CD4-positive, alpha-beta T cell (primary cell): ENCODE measurements at regions of chr5 and their contacts with region 1.

Region 1: DNA sequence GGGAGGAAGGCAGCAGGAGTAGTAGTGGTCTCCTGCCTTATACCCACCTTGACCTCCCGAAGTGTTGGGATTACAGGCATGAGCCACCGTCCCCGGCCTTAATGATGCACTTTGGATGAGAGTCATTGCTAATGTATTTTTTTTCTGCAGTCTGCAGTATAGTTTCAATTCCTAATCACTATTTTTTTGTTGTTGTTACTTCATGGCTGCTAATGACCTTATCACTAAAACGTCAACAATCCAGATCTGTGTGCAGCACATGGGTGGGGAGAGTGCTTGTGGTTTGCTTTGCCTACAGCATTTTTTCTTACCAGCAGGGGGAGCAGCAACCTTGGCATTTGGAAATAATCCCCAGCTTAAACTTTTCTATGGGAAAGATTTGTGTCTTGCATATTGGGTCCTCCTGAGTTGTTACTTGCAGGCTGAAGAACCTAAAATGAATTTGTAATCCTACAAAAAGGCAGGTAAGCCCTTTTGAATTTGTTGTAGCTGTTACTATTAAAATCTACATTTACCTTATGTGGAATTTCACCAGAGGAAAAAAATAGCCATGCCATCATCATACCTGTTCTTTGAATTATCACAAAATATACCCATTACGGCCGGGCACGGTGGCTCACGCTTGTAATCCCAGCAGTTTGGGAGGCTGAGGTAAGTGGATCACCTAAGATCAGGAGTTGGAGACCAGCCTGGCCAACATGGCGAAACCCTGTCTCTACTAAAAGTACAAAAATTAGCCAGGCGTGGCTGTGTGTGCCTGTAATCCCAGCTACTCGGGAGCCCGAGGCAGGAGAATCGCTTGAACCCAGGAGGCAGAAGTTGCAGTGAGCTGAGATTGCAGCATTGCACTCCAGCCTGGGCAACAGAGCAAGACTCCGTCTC is 6.3 kb upstream of the MED7 start:
- DNase-seq: peak; percentile 66 to 92 (median 77)
- ATAC-seq: peak; percentile 86
- H3K4me3 ChIP-seq: no peak overlapping the region
- H3K4me3 Mint-ChIP-seq: peak overlapping the region; percentile 28
- H3K27ac ChIP-seq: no peak overlapping the region
- H3K27ac Mint-ChIP-seq: peak overlapping the region; percentile 53
- H3K4me1 ChIP-seq: peaks cover 35% of the 10 kb centered on the region
- H3K4me1 Mint-ChIP-seq: peaks cover 46% of the 10 kb centered on the region
- H3K27me3 ChIP-seq: no peaks in the 10 kb centered on the region
- H3K27me3 Mint-ChIP-seq: no peaks in the 10 kb centered on the region
- CTCF ChIP-seq: peak; percentile 82

Region 2: DNA sequence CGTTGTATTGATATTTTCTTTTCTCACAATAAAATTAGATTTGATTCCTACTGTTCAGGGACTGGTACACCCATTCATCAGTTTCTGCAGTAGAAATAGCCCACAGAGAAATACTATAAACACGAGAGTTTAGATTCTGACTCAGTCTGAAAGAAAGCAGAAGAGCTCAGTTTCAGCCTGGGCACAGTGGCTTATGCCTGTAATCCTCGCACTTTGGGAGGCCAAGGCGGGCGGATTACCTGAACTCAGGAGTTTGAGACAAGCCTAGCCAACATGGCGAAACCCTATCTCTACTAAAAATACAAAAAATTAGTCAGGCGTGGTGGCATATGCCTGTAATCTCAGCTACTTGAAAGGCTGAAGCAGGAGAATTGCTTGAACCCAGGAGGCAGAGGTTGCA is 40.2 kb after region 1 on chr5:
- CTCF ChIA-PET with region 1: interaction called, 13 read pairs
- POLR2A ChIA-PET with region 1: interaction called, 27 read pairs
- intact Hi-C with region 1: loop called in 1 of 2 experiments (anchors 2 kb)
- DNase-seq: peak in 1 of 14 experiments; percentile 42
- ATAC-seq: no peak
- H3K4me3 ChIP-seq: peak overlapping the region; percentile 85
- H3K4me3 Mint-ChIP-seq: peak overlapping the region; percentile 92
- H3K27ac ChIP-seq: peak overlapping the region; percentile 38 to 67
- H3K27ac Mint-ChIP-seq: peak overlapping the region; percentile 96
- H3K4me1 ChIP-seq: peaks cover 72% of the 10 kb centered on the region
- H3K4me1 Mint-ChIP-seq: peaks cover 92% of the 10 kb centered on the region
- H3K27me3 ChIP-seq: no peaks in the 10 kb centered on the region
- H3K27me3 Mint-ChIP-seq: no peaks in the 10 kb centered on the region
- CTCF ChIP-seq: no peak

Region 3: DNA sequence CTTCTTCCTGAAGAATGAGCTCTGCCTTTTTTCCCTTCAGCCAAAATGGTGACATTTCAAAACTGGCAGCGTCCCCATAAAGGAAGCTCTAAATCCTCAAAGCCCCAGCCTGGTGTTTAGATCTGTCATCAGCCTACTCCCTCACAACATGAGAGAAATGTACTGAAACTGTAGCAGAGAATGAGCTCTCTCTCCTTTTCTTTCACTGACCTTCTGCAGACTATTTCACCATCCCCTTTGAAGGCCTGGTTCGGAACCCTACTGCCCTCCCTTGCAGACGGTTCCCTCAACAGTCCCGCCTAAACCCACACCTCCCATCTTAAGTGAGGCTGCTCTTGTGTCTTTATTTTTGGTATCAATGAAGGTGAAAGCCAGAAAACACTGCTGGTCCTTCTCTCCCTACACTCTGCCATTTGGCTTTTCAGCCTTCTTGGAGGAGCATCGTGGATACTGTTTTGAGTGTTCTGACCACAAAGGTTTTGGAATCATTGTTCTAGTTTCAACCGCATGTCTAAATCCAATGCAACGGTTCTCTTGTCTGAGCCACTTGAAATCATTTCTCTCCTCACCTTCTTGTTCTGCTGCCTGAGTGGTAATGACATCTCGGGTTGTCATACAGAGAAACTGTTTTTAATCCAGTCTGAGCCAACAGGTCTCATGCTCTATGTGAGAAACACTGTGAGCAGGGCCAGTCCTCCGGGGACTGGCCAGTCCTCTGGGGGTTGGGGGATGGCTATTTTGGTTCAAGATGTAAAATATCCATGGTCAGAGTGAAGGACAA is 70.7 kb after region 1 on chr5:
- CTCF ChIA-PET with region 1: interaction called, 5 read pairs
- POLR2A ChIA-PET with region 1: interaction called, 26 read pairs
- intact Hi-C with region 1: loop called in 1 of 2 experiments (anchors 1 kb)
- DNase-seq: no peak
- ATAC-seq: no peak
- H3K4me3 ChIP-seq: no peak overlapping the region
- H3K4me3 Mint-ChIP-seq: peak overlapping the region; percentile 27
- H3K27ac ChIP-seq: peak overlapping the region; percentile 70 to 72
- H3K27ac Mint-ChIP-seq: peak overlapping the region; percentile 80
- H3K4me1 ChIP-seq: peaks cover 99% of the 10 kb centered on the region
- H3K4me1 Mint-ChIP-seq: peaks cover 85% of the 10 kb centered on the region
- H3K27me3 ChIP-seq: no peaks in the 10 kb centered on the region
- H3K27me3 Mint-ChIP-seq: no peaks in the 10 kb centered on the region
- CTCF ChIP-seq: no peak

Region 4: GRCh38 chr5:157245477-157245876 is 96.5 kb after region 1 on chr5:
- CTCF ChIA-PET with region 1: interaction called, 3 read pairs
- POLR2A ChIA-PET with region 1: interaction called, 25 read pairs
- intact Hi-C with region 1: loop called (anchors 5 kb)
- DNase-seq: no peak
- ATAC-seq: no peak
- H3K4me3 ChIP-seq: no peak overlapping the region
- H3K4me3 Mint-ChIP-seq: no peak overlapping the region
- H3K27ac ChIP-seq: no peak overlapping the region
- H3K27ac Mint-ChIP-seq: peak overlapping the region; percentile 91
- H3K4me1 ChIP-seq: peaks cover 60% of the 10 kb centered on the region
- H3K4me1 Mint-ChIP-seq: peaks cover 68% of the 10 kb centered on the region
- H3K27me3 ChIP-seq: no peaks in the 10 kb centered on the region
- H3K27me3 Mint-ChIP-seq: no peaks in the 10 kb centered on the region
- CTCF ChIP-seq: no peak

Region 5: GRCh38 chr5:157731272-157732129 is 582.5 kb after region 1 on chr5 and contains the start of gene THG1L:
- CTCF ChIA-PET with region 1: no interaction called
- POLR2A ChIA-PET with region 1: no interaction called
- intact Hi-C with region 1: loop called in 1 of 2 experiments (anchors 5 kb)
- DNase-seq: peak; percentile 94 to 99 (median 97)
- ATAC-seq: peak; percentile 97
- H3K4me3 ChIP-seq: peak within 1 kb of the TSS; percentile 90
- H3K4me3 Mint-ChIP-seq: peak within 1 kb of the TSS; percentile 94
- H3K27ac ChIP-seq: peak within 1 kb of the TSS; percentile 79 to 89
- H3K27ac Mint-ChIP-seq: peak within 1 kb of the TSS; percentile 91
- H3K4me1 ChIP-seq: peaks cover 9% of the 10 kb centered on the region
- H3K4me1 Mint-ChIP-seq: peaks cover 16% of the 10 kb centered on the region
- H3K27me3 ChIP-seq: no peaks in the 10 kb centered on the region
- H3K27me3 Mint-ChIP-seq: no peaks in the 10 kb centered on the region
- CTCF ChIP-seq: no peak
- total RNA-seq, gene THG1L: 4.1 to 4.6 TPM